ENCODE measurements at regions of chr16 and their contacts with region 1.

Region 1: DNA sequence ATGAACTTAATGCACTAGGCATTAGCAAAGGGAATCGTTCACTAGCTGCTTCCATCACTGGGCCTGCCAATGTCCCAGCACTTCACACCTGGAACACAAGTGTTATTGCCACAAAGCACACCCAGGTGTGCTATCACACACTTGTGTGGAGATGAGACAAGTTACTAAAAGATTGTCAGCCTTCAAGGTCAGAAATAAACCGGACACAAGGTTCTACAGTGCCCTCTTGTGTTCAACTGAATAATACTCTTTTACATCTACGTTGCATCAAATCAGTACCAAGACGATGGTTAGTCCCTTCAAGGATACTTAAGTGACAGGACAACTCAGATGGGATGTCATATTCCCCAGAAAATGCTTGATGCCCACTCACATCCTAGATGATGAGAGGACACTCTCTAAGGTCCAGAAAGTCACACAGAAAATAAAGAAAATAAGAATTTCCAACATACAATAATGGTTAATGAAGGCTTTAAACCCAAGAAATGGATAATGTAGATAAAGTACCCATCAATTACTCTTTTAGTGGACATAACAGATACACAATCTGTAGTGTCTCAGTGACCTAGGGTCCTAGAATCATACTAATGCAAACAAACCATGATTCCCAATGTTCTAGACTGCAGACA is 16.4 kb upstream of the GLG1 start:
- DNase-seq: peak in 1 of 2 donors; percentile 74
- ATAC-seq: peak; percentile 60 to 79 (median 77)
- H3K4me3 ChIP-seq: no peak overlapping the region
- H3K4me3 Mint-ChIP-seq: no peak overlapping the region
- H3K27ac ChIP-seq: no peak overlapping the region
- H3K27ac Mint-ChIP-seq: peak overlapping the region; percentile 10 to 24
- H3K4me1 ChIP-seq: no peaks in the 10 kb centered on the region
- H3K4me1 Mint-ChIP-seq: peaks cover 6% of the 10 kb centered on the region in 2 donors
- H3K27me3 ChIP-seq: no peaks in the 10 kb centered on the region
- H3K27me3 Mint-ChIP-seq: no peaks in the 10 kb centered on the region
- CTCF ChIP-seq: peak; percentile 66

Region 2: DNA sequence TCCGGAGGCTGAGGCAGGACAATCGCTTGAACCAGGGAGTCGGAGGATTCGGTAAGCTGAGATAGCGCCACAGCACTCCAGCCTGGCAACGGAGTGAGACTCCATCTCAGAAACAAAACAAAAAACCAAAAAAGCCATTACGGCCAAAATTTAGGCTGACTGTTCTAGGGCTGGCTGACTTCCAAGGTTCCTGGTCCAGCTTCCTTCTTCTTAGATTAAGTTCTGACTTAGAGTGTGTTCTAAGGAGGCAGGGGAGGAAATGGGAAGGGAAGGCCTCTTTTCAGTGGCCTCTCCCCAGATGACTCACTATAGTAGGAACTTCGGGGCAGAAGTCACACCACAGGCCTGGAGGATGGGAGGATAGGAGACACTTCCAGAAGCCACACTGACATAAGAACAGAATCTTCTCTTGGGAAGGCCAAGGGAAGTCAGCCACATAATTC is 174.3 kb before region 1 on chr16:
- intact Hi-C with region 1: no loop called
- DNase-seq: no peak
- ATAC-seq: no peak
- H3K4me3 ChIP-seq: no peak overlapping the region
- H3K4me3 Mint-ChIP-seq: no peak overlapping the region
- H3K27ac ChIP-seq: no peak overlapping the region
- H3K27ac Mint-ChIP-seq: peak overlapping the region; percentile 26 to 52
- H3K4me1 ChIP-seq: peaks cover 5% of the 10 kb centered on the region
- H3K4me1 Mint-ChIP-seq: peaks cover 0 to 14% of the 10 kb centered on the region in 2 donors
- H3K27me3 ChIP-seq: no peaks in the 10 kb centered on the region
- H3K27me3 Mint-ChIP-seq: no peaks in the 10 kb centered on the region
- CTCF ChIP-seq: no peak

Region 3: GRCh38 chr16:74501484-74502479 is 121.5 kb before region 1 on chr16:
- intact Hi-C with region 1: loop called (anchors 10 kb)
- DNase-seq: no peak
- ATAC-seq: no peak
- H3K4me3 ChIP-seq: no peak overlapping the region
- H3K4me3 Mint-ChIP-seq: no peak overlapping the region
- H3K27ac ChIP-seq: no peak overlapping the region
- H3K27ac Mint-ChIP-seq: peak overlapping the region; percentile 14 to 24
- H3K4me1 ChIP-seq: no peaks in the 10 kb centered on the region
- H3K4me1 Mint-ChIP-seq: peaks cover 8 to 13% of the 10 kb centered on the region in 2 donors
- H3K27me3 ChIP-seq: no peaks in the 10 kb centered on the region
- H3K27me3 Mint-ChIP-seq: no peaks in the 10 kb centered on the region
- CTCF ChIP-seq: no peak

Region 4: DNA sequence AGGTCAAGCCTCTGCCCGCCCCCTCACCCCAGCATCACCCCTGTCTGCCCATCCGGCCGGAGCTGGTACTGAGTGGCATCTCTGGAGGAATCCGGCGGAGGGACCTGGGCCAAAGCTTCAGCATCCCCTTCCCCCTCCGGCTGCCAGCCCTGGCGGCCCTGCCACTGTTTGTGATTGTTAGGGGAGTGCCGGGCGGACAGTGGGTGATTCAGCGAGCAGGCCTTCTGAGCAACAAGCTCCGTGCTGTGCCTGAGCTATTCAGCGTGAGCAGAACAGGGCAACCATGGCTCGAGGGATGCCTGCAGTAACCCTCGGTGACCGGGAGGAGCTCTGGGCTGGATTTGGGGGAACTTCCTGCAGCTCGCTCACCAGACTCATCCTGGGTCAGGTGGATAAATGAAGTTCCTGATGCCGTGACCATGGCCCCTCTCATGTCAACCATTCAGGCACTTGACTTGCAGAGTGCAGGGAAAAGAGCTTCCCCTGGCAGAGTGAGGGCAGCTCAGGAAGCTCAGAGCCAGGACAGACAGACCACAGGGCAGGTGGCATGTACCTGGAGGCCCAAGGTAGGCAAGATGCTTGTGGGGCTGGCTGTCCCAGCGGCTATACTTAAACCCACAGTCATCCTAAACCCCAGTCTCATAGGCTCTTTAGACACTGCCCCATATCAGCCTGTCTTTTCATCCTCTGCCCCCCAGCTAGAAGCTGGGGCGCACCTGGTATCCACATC is 101.7 kb after region 1 on chr16:
- intact Hi-C with region 1: no loop called
- DNase-seq: no peak
- ATAC-seq: no peak
- H3K4me3 ChIP-seq: no peak overlapping the region
- H3K4me3 Mint-ChIP-seq: no peak overlapping the region
- H3K27ac ChIP-seq: no peak overlapping the region
- H3K27ac Mint-ChIP-seq: no peak overlapping the region
- H3K4me1 ChIP-seq: peaks cover 6% of the 10 kb centered on the region
- H3K4me1 Mint-ChIP-seq: peaks cover 0 to 9% of the 10 kb centered on the region in 2 donors
- H3K27me3 ChIP-seq: no peaks in the 10 kb centered on the region
- H3K27me3 Mint-ChIP-seq: peaks cover 7 to 8% of the 10 kb centered on the region in 2 donors
- CTCF ChIP-seq: no peak